GM13977 (cell line): ENCODE measurements at regions of chr12 and their contacts with region 1.

Region 1: GRCh38 chr12:105420659-105421240 is 90.3 kb downstream of the C12orf75 start:
- DNase-seq: peak; percentile 56
- CTCF ChIP-seq: peak; percentile 89

Region 2: DNA sequence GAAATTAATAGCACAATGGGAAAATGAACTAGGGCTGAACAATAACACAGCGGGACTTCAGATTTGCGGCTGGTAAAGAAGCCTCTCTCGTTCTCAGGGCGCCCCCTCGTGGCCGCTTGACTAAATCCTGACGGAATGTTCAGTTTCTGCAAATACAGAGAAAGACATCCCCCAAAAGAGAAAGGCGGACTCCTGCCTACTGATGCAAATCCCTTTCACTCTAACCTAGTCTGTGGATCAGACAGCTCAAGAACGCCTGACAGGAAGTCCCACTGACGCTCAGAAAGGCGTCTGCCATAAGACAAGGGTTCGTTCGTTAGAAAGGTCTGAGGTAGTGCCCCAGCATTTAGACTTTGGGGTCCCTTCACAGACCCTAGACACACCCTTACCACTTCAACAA is 715.5 kb after region 1 on chr12:
- in situ Hi-C with region 1: loop called (anchors 10 kb)
- DNase-seq: peak; percentile 78
- CTCF ChIP-seq: peak; percentile 83